Naive thymus-derived CD4-positive, alpha-beta T cell (primary cell): ENCODE measurements at regions of chr19 and their contacts with region 1.

Region 1: GRCh38 chr19:15418588-15419412 is at the start of gene AKAP8L:
- DNase-seq: peak; percentile 90 to 100 (median 99)
- ATAC-seq: peak; percentile 95
- H3K4me3 ChIP-seq: peak within 1 kb of the TSS; percentile 71
- H3K4me3 Mint-ChIP-seq: peak within 1 kb of the TSS; percentile 92 to 100 (median 99)
- H3K27ac ChIP-seq: peak within 1 kb of the TSS; percentile 88
- H3K27ac Mint-ChIP-seq: peak within 1 kb of the TSS; percentile 94 to 99 (median 97)
- H3K4me1 ChIP-seq: peaks cover 23 to 25% of the 10 kb centered on the region in 2 donors
- H3K4me1 Mint-ChIP-seq: peaks cover 31 to 53% (median 42%) of the 10 kb centered on the region in 7 donors
- H3K27me3 ChIP-seq: no peaks in the 10 kb centered on the region
- H3K27me3 Mint-ChIP-seq: no peaks in the 10 kb centered on the region
- total RNA-seq, gene AKAP8L: 81.2 to 208 (median 146) TPM

Region 2: DNA sequence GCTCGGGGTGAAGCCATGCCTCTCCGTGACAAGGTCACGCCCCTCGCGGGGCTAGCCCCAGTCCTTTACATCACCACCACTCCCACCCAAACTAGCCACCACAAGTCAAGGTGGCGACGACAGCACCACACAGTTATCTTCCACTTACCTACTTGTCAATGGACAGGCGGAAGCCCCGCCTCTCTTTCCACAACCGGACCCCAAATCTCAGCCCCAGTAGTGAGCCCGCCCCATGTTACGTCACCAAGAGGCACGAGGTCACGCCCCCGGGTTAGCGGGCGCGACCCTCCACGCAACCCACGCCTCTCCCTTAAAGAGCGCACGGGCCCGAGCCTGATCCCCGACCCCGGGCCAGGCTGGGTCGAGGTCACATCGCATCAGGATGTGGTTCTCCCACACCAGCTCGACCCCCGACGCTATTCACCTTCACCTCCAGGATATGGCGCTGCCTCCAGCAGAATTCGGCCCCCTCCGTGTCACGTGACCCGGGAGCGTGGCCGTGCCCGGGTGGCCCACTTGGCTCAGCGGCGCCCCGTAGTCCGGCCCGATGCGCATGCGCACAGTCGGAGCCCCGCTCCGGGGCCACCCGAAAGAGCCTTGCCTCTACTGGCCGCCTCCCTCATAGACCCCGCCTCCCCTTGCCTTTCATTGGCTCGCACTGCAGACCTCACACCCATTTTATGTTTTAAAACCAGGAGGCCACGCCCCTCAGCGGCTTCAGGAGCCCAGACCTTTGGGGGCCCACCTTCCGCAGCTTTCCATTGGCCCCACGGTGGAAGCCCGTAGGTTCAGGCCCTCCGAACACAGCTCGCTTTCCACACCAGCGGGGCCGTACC is 293.4 kb before region 1 on chr19:
- CTCF ChIA-PET with region 1: no interaction called
- POLR2A ChIA-PET with region 1: interaction called, 3 read pairs
- intact Hi-C with region 1: loop called (anchors 1 kb)
- DNase-seq: peak; percentile 94 to 98 (median 96)
- ATAC-seq: peak; percentile 93
- H3K4me3 ChIP-seq: peak overlapping the region; percentile 90
- H3K4me3 Mint-ChIP-seq: peak overlapping the region; percentile 89 to 100 (median 98)
- H3K27ac ChIP-seq: peak overlapping the region; percentile 92
- H3K27ac Mint-ChIP-seq: peak overlapping the region; percentile 91 to 100 (median 97)
- H3K4me1 ChIP-seq: peaks cover 0 to 25% of the 10 kb centered on the region in 2 donors
- H3K4me1 Mint-ChIP-seq: peaks cover 27 to 59% (median 44%) of the 10 kb centered on the region in 7 donors
- H3K27me3 ChIP-seq: no peaks in the 10 kb centered on the region
- H3K27me3 Mint-ChIP-seq: peaks cover 0 to 2% (median 0%) of the 10 kb centered on the region in 5 donors

Region 3: GRCh38 chr19:15264061-15264932 is 154.5 kb before region 1 on chr19:
- CTCF ChIA-PET with region 1: interaction called, 8 read pairs
- POLR2A ChIA-PET with region 1: no interaction called
- intact Hi-C with region 1: loop called (anchors 1 kb)
- DNase-seq: peak; percentile 54 to 77 (median 65)
- ATAC-seq: peak; percentile 79
- H3K4me3 ChIP-seq: no peak overlapping the region
- H3K4me3 Mint-ChIP-seq: no peak overlapping the region
- H3K27ac ChIP-seq: no peak overlapping the region
- H3K27ac Mint-ChIP-seq: peak overlapping the region in 2 of 9 donors; percentile 14 to 38
- H3K4me1 ChIP-seq: no peaks in the 10 kb centered on the region
- H3K4me1 Mint-ChIP-seq: peaks cover 7 to 19% (median 11%) of the 10 kb centered on the region in 7 donors
- H3K27me3 ChIP-seq: no peaks in the 10 kb centered on the region
- H3K27me3 Mint-ChIP-seq: no peaks in the 10 kb centered on the region

Region 4: GRCh38 chr19:15432629-15433518 is 14.1 kb after region 1 on chr19:
- CTCF ChIA-PET with region 1: interaction called, 20 read pairs
- POLR2A ChIA-PET with region 1: interaction called, 58 read pairs
- intact Hi-C with region 1: loop called (anchors 1 kb)
- DNase-seq: peak; percentile 87 to 95 (median 92)
- ATAC-seq: peak; percentile 99
- H3K4me3 ChIP-seq: peak overlapping the region; percentile 96
- H3K4me3 Mint-ChIP-seq: peak overlapping the region; percentile 86 to 99 (median 97)
- H3K27ac ChIP-seq: peak overlapping the region; percentile 90
- H3K27ac Mint-ChIP-seq: peak overlapping the region; percentile 85 to 98 (median 94)
- H3K4me1 ChIP-seq: peaks cover 15 to 26% of the 10 kb centered on the region in 2 donors
- H3K4me1 Mint-ChIP-seq: peaks cover 24 to 32% (median 29%) of the 10 kb centered on the region in 7 donors
- H3K27me3 ChIP-seq: no peaks in the 10 kb centered on the region
- H3K27me3 Mint-ChIP-seq: peaks cover 0 to 2% (median 0%) of the 10 kb centered on the region in 5 donors

Region 5: DNA sequence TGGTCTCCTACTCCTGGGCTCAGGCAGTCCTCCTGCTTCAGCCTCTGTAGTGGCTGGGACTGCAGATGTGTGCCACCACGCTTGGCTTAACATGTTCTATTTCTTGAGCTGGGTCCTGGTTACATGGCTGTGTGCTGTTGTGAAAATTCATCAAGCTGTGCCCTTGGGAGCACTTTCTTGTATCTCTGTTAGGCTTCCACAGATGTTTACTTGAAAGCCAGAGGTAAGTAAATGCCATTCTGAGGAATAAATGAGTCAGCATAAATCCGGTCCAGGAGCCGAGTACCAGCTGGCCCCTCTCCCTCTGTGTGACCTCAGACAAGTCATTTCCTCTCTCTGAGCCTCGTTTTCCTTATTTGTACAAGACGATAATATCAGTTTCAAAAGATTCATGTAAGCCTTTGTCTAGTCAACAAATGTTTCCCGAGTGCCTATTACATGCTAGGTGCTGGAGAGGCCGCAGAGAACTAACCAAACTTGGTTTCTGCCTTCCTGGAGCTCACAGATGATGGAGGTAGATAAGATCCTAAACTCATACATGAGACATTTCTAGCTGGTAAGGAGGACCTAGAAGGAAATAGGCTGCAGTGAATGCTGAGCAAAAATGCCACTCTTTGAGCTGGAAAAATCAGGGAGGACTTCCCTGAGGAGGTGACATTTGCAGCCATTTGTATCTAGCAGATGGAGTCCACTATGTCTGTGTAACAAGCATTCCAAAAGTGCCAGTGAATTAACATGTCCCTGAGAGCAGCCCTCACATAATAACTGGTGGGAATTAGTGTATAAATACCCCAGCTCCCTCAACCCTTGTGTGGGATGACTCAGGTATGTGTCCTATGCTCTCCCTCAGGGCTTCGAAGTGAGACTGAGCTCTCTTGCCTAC is 48.3 kb after region 1 on chr19:
- CTCF ChIA-PET with region 1: interaction called, 19 read pairs
- POLR2A ChIA-PET with region 1: interaction called, 29 read pairs
- intact Hi-C with region 1: loop called (anchors 1 kb)
- DNase-seq: peak in 6 of 9 donors; percentile 17 to 58 (median 32)
- ATAC-seq: peak; percentile 42
- H3K4me3 ChIP-seq: peak overlapping the region; percentile 1
- H3K4me3 Mint-ChIP-seq: peak overlapping the region; percentile 63 to 95 (median 76)
- H3K27ac ChIP-seq: peak overlapping the region; percentile 52
- H3K27ac Mint-ChIP-seq: peak overlapping the region; percentile 85 to 95 (median 87)
- H3K4me1 ChIP-seq: peaks cover 43 to 47% of the 10 kb centered on the region in 2 donors
- H3K4me1 Mint-ChIP-seq: peaks cover 39 to 75% (median 53%) of the 10 kb centered on the region in 7 donors
- H3K27me3 ChIP-seq: no peaks in the 10 kb centered on the region
- H3K27me3 Mint-ChIP-seq: peaks cover 0 to 14% (median 0%) of the 10 kb centered on the region in 5 donors